ENCODE measurements at regions of chr3 and their contacts with region 1.

Region 1: DNA sequence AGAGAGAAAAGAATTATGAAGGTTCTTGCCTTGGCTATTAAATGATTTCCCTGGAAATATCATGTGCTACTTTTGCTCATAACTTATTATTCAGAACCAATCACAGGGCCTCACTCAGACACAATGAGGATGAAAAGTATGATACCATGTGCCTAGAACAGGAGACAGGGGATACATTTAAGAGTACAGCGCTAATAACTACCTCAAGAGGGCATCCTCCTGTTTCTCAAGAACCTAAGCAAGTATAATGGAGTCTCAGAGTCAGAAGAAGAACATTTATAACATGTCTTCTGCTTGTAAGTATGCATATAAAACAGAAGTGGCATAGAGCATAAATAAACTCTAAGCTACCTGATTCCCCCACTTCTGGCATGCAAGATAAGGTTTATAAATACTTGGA is 125.4 kb upstream of the MME start:
- DNase-seq: no peak
- ATAC-seq: peak; percentile 72 to 85
- H3K4me3 ChIP-seq: no peak overlapping the region
- H3K27ac ChIP-seq: no peak overlapping the region
- H3K4me1 ChIP-seq: peaks cover 4 to 7% of the 10 kb centered on the region in 2 donors
- H3K27me3 ChIP-seq: no peaks in the 10 kb centered on the region
- CTCF ChIP-seq: peak in 3 of 5 experiments; percentile 17 to 43 (median 20)
- POLR2A ChIP-seq: no peak

Region 2: DNA sequence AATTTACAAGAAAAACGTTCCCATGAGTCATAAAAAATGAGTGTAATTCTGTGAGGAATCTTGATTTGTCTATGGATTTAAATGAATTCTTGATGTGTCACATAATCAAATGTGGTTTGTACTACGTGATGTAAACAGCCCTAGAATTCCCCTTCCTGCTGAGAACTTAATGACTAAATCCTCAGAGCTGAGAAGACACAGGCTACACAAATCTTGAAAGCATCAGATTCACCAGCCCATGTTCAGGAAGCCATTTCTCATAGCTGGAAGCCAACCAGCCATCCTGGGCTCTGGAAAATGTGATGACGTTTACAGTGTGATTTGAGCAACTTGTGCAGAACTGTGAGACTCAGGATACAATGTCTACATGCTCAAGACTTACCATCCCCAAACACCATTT is 68.3 kb before region 1 on chr3:
- in situ Hi-C with region 1: no loop called
- intact Hi-C with region 1: no loop called
- DNase-seq: no peak
- ATAC-seq: no peak
- H3K4me3 ChIP-seq: no peak overlapping the region
- H3K27ac ChIP-seq: no peak overlapping the region
- H3K4me1 ChIP-seq: no peaks in the 10 kb centered on the region
- H3K27me3 ChIP-seq: no peaks in the 10 kb centered on the region
- CTCF ChIP-seq: no peak
- POLR2A ChIP-seq: no peak

Region 3: DNA sequence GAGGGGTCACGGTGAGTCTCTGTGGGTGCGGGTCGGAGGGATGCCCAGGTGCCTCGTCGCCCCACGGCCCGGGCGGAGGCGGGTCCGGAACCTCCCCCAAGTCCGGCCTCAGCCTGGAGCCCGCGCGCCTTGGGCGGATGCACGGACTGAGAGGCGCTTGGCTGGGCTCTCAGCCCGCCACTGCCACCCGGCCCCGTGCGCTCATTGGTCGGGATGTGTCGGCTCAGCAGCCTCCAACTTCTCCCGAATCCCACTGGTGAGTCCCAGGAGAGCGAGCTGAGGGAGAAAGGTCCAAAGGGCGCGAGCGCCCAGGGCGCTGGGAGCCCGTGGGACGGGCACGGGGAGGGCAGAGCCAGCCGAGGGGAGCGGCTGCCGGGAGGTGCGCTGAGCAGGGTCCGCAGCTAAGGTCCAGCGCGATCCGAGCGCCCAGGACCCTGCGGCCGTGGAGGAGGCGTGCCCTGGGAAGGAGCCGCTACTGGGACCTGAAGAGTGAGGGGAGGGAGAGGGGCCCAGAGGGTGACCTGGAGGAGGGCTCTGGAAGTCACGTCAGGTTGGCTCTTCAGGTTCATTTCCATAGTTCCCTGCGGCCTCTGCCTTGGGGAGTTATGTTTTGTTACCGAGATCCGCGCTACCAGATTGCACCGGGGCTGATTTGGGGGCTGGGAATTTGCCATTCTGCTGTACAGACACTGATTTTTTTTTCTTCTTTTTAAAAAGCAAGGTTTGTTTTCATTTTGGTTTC is 125.2 kb after region 1 on chr3 and contains the start of gene MME:
- in situ Hi-C with region 1: no loop called
- intact Hi-C with region 1: loop called (anchors 5 kb)
- DNase-seq: peak; percentile 56 to 63
- ATAC-seq: peak; percentile 84 to 87
- H3K4me3 ChIP-seq: peak within 1 kb of the TSS; percentile 69 to 79 (median 77)
- H3K27ac ChIP-seq: peak within 1 kb of the TSS; percentile 60 to 87 (median 82)
- H3K4me1 ChIP-seq: peaks cover 0 to 14% of the 10 kb centered on the region in 2 donors
- H3K27me3 ChIP-seq: peaks cover 0 to 6% (median 0%) of the 10 kb centered on the region in 3 donors
- CTCF ChIP-seq: no peak
- POLR2A ChIP-seq: peak; percentile 32 to 61
- total RNA-seq, gene MME: 40.9 to 95.4 (median 68.0) TPM

Region 4: GRCh38 chr3:155185631-155186071 is 230.9 kb after region 1 on chr3:
- in situ Hi-C with region 1: no loop called
- intact Hi-C with region 1: loop called (anchors 10 kb)
- DNase-seq: no peak
- ATAC-seq: peak; percentile 35 to 57
- H3K4me3 ChIP-seq: no peak overlapping the region
- H3K27ac ChIP-seq: peak overlapping the region in 2 of 4 donors; percentile 8 to 19
- H3K4me1 ChIP-seq: peaks cover 11 to 47% of the 10 kb centered on the region in 2 donors
- H3K27me3 ChIP-seq: no peaks in the 10 kb centered on the region
- CTCF ChIP-seq: no peak
- POLR2A ChIP-seq: no peak

Region 5: DNA sequence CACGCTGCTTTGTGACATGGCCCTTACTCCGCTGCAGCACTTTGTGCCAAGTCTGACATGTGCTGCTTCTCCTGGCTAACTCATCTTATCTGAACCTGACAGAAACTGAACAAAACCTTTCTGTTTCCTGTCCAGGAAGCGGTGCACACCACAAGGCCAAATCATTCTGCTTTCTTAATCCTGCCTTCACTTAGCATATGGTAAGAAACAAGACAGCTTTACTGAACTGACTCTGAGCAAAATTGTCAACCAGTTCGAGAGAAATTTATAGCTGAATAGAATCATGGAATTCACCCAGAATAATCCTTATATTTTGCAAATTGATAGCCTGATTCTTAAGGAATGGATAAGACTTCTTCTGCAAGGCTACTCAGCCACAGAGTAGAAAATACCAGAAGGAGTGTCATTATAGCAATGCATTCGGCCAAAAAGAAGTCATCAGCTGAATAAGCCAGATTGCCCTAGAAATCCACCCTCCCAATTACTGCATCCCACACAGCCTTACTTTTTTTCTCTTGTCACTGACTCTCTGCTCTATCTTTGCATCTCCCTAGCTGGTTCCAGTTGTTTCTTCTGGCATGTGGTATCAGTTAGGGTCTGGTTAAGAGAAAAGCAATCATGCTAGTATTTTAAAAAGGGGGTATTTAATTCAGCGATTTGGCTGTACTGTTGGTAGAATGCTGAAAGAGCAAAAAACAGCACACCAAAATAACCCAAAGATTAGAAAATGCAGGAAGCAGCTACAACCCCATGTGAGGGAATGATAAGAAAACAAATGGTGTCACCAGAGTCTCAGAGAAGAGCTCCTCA is 380.4 kb after region 1 on chr3:
- in situ Hi-C with region 1: loop called in 1 of 4 experiments (anchors 25 kb)
- intact Hi-C with region 1: no loop called
- DNase-seq: no peak
- ATAC-seq: no peak
- H3K4me3 ChIP-seq: no peak overlapping the region
- H3K27ac ChIP-seq: no peak overlapping the region
- H3K4me1 ChIP-seq: no peaks in the 10 kb centered on the region
- H3K27me3 ChIP-seq: no peaks in the 10 kb centered on the region
- CTCF ChIP-seq: no peak
- POLR2A ChIP-seq: no peak

Measured in gastrocnemius medialis (tissue), 4 donors.